Dendritic cell treated with granulocyte-macrophage colony-stimulating factor and Interleukin-4, amounts not matched to agents 40 ng/mL and 50 ng/mL, for 4 days (primary cell): ENCODE measurements at regions of chr2 and their contacts with region 1.

Region 1: GRCh38 chr2:3960106-3960505 is 256.7 kb downstream of the DCDC2C start:
- H3K4me3 Mint-ChIP-seq: no peak overlapping the region
- H3K27ac Mint-ChIP-seq: no peak overlapping the region
- H3K4me1 Mint-ChIP-seq: no peaks in the 10 kb centered on the region
- H3K27me3 Mint-ChIP-seq: no peaks in the 10 kb centered on the region

Region 2: GRCh38 chr2:2410987-2411386 is 1549.1 kb before region 1 on chr2:
- intact Hi-C with region 1: no loop called
- H3K4me3 Mint-ChIP-seq: no peak overlapping the region
- H3K27ac Mint-ChIP-seq: no peak overlapping the region
- H3K4me1 Mint-ChIP-seq: no peaks in the 10 kb centered on the region
- H3K27me3 Mint-ChIP-seq: no peaks in the 10 kb centered on the region

Region 3: DNA sequence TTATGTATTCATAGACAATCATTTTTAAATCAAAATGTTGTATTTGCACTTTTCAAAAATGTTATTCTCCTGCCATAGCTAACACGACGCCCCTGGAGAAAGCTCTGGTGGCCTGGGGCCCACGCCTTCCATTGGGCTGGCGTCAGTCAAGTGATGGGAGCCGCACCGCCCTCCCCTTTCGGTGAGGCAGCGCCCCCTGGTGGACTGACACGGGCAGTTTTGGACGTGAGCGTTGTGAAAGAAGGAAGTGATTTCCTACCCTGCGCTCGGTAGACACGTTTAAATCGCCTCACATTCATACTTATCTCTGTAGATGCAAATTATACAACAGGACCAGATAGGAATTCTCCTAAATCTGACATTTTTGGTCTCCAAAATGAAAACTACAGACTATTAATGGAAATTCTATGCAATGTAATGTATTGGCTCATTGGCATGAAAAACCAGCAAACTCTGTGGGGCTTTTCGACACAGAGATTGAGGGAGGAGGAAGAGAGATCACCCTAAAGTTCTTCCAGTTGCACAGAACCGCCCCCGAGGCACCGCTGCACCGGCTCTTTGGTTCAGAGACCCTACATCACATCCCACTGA is 1405.9 kb after region 1 on chr2:
- intact Hi-C with region 1: loop called (anchors 5 kb)
- H3K4me3 Mint-ChIP-seq: no peak overlapping the region
- H3K27ac Mint-ChIP-seq: no peak overlapping the region
- H3K4me1 Mint-ChIP-seq: no peaks in the 10 kb centered on the region
- H3K27me3 Mint-ChIP-seq: no peaks in the 10 kb centered on the region